Psoas muscle (tissue), 8 donors: ENCODE measurements at regions of chr3 and their contacts with region 1.

Region 1: DNA sequence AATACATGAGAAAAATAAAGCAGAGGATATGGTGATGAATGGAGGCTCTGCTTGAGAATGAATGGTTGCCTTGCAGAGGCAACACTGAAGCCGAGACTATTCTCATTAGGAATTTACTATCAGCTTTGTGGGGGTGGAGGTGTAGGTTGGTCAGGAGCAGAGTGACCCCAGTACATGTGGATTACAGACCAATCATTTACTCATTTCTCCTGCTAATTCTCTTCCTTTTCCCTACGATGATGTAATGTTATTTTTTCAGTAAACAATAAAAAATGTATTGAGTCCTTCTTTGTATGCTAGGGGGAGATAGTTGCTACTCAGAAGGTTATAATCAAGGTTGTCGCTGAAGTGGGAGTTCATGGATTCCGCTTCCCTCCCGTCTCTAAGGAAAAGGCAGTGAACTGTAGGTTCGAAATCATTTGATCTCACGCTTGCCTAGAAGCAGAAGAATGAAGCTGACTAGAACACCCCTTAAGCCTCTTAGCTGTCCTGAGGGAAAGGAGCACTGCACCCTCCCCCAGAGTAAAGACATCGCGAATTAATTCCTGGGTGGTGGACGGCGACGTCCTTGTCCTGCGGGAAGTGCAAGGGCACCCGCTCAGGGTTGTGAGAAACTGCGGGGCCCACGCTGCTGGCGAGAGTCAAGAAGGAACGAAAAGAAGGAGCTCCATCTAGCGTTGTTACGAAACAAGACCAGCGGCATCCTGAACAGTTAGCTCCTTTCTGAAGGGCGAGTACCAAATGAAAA is 213.2 kb upstream of the PFN2 start:
- DNase-seq: peak; percentile 71 to 82
- ATAC-seq: peak; percentile 97 to 99 (median 98)
- H3K4me3 ChIP-seq: peak overlapping the region; percentile 58
- H3K27ac ChIP-seq: peak overlapping the region; percentile 81
- H3K4me1 ChIP-seq: no peaks in the 10 kb centered on the region
- H3K27me3 ChIP-seq: no peaks in the 10 kb centered on the region
- CTCF ChIP-seq: peak; percentile 63

Region 2: GRCh38 chr3:150062492-150062891 is 121.4 kb before region 1 on chr3:
- intact Hi-C with region 1: loop called in 1 of 2 experiments (anchors 2 kb)
- DNase-seq: no peak
- ATAC-seq: peak; percentile 41 to 66 (median 45)
- H3K4me3 ChIP-seq: peak overlapping the region; percentile 31
- H3K27ac ChIP-seq: peak overlapping the region; percentile 95
- H3K4me1 ChIP-seq: peaks cover 61% of the 10 kb centered on the region
- H3K27me3 ChIP-seq: no peaks in the 10 kb centered on the region
- CTCF ChIP-seq: no peak

Region 3: GRCh38 chr3:150146991-150147761 is 36.7 kb before region 1 on chr3:
- intact Hi-C with region 1: loop called in 1 of 2 experiments (anchors 5 kb)
- DNase-seq: peak; percentile 67 to 81
- ATAC-seq: peak; percentile 55 to 72 (median 69)
- H3K4me3 ChIP-seq: peak overlapping the region; percentile 17
- H3K27ac ChIP-seq: peak overlapping the region; percentile 96
- H3K4me1 ChIP-seq: peaks cover 57% of the 10 kb centered on the region
- H3K27me3 ChIP-seq: no peaks in the 10 kb centered on the region
- CTCF ChIP-seq: no peak